Right ventricle myocardium inferior (tissue), 1 donor: ENCODE measurements at regions of chr4 and their contacts with region 1.

Region 1: DNA sequence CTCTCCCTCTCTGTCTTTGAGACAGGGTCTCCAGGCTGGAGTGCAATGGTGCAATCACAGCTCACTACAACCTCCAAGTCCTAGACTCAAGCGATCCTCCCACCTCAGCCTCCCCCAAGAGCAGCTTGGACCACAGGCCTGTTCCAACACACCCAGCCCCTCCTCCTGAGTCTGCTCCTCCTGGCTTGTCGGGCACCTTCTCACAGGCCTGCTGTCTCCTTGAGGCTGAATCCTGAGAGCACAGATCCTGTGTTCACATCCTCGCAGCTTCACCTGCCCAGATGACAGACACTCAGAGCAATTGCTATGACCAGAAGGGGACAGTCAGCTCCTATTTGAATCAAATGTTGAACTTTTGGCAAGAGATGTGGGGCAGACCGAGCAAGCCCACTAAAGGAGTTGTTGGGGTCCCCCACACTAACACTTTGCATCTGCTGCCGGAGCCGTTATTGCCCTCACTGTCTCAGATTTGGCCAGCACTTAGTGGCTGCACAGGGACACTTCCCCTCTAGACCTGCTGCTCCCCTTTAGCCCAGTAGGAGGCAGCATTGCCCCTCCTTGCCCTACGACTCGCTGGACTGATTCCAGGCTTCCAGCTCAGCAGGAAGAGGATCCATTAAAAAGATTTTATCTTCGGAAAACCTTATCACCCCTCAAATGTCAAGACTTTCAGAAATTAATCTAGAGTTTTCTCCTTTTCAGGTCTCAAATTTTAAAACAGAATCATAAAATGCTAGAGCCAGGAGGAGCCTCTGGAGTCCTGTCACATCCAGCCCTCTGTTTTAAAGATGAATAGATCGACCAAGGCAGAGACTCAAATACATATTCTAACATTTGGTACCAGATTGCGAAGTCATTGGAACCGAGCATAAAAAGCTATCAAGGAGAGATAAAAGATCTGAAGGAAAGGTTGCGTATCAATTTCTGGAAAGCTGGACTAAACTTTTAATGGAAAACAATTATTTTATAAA is 113.7 kb downstream of the USP46 start:
- DNase-seq: peak; percentile 75
- ATAC-seq: peak; percentile 84

Region 2: GRCh38 chr4:52143815-52144214 is 401.6 kb before region 1 on chr4:
- intact Hi-C with region 1: no loop called
- DNase-seq: no peak
- ATAC-seq: no peak

Region 3: GRCh38 chr4:52273885-52274284 is 271.5 kb before region 1 on chr4:
- intact Hi-C with region 1: no loop called
- DNase-seq: no peak
- ATAC-seq: no peak

Region 4: GRCh38 chr4:52358883-52359321 is 186.5 kb before region 1 on chr4:
- intact Hi-C with region 1: no loop called
- DNase-seq: no peak
- ATAC-seq: peak; percentile 91

Region 5: GRCh38 chr4:52376132-52376704 is 169.2 kb before region 1 on chr4:
- intact Hi-C with region 1: loop called (anchors 5 kb)
- DNase-seq: no peak
- ATAC-seq: no peak

Region 6: DNA sequence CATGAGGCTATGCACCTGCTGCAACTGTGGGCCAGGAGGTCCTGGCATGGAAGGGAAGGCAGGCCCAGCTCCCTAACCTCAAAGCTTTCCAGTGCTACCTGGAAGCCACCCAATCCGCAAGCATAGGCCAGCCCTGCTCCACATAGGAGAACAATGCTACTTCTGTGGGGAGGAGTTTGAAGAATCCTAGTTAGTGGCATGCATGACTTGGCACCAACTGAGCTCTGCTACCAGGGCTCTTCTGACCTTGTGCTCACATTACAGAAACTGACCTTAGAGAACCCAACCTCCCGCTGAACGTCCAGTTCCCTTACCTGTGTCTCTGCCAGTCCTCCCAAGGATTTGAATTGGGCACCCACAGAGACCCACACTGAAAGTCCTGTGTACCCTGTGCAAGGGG is 54.9 kb after region 1 on chr4:
- intact Hi-C with region 1: loop called (anchors 5 kb)
- DNase-seq: peak; percentile 65
- ATAC-seq: peak; percentile 89

Region 7: DNA sequence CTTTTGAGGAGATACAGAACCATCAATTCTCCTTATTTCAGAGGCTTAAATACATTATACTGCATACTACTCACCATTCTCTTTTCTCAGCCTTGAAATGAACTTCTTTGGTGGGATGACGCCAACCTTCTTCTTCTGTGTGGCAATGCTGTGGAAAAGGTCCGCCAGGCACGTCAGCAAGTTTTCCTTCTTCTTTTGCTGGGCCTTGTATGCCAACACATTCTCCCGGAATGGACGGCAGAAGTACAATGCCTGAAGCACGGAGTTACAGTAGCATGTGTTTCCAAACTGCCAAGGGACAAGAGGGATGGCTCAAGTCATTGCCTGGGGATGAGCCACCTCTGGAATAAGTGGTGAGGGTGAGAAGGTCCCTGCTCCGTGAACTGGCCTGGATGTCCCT is 82.5 kb after region 1 on chr4:
- intact Hi-C with region 1: no loop called
- DNase-seq: no peak
- ATAC-seq: no peak

Region 8: DNA sequence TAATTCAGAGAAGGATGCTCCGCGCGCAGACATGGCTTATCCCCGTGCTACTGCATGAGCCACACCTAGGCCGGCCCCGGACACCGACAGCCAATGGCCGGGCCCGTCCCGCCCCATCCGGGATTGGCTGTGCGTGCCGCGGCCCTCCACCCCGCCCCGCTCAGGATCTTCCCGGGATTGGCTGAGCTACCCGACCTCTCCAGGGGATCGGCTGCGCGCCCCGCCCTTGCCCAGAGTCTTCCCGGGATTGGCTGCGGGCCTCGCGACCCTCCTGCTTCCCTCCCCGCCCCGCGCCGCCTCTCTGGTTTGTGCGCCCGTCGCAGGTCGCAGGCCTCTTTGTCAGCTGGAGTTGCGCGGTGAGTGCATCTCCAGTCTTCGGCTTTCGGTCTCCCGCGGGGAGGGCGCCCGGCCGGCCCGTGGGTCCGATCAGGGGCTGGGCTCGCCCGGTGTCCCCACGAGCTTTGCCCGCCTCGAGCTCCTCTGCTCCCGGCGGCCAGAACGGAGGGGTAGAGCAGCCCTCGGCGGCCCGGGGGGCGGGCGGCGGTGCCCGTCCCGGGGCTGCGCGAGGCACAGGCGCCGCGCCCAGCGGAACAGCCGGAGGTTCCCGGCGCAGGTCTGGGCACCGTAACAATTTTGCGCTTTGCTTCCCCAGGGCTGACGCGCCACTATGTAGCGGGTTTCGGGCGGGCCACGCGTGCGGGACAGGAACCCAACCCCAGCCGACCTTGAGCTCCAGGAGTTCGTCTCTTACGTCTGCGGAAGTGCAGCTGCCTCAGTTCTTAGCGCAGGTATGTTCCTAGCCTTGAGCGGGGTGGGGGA is 167.0 kb after region 1 on chr4:
- intact Hi-C with region 1: loop called (anchors 1 kb)
- DNase-seq: peak; percentile 98
- ATAC-seq: peak; percentile 99

Region 9: GRCh38 chr4:52983563-52984303 is 438.3 kb after region 1 on chr4:
- intact Hi-C with region 1: loop called (anchors 5 kb)
- DNase-seq: no peak
- ATAC-seq: peak; percentile 78